ENCODE measurements at regions of chr7 and their contacts with region 1.

Region 1: GRCh38 chr7:153524070-153524601 is 528.1 kb upstream of the DPP6 start:
- DNase-seq: peak; percentile 4 to 60
- ATAC-seq: peak; percentile 37 to 94 (median 75)
- H3K4me3 ChIP-seq: no peak overlapping the region
- H3K27ac ChIP-seq: peak overlapping the region in 4 of 10 donors; percentile 33 to 72 (median 52)
- H3K4me1 ChIP-seq: peaks cover 0 to 14% (median 4%) of the 10 kb centered on the region in 9 donors
- H3K27me3 ChIP-seq: no peaks in the 10 kb centered on the region
- CTCF ChIP-seq: no peak

Region 2: DNA sequence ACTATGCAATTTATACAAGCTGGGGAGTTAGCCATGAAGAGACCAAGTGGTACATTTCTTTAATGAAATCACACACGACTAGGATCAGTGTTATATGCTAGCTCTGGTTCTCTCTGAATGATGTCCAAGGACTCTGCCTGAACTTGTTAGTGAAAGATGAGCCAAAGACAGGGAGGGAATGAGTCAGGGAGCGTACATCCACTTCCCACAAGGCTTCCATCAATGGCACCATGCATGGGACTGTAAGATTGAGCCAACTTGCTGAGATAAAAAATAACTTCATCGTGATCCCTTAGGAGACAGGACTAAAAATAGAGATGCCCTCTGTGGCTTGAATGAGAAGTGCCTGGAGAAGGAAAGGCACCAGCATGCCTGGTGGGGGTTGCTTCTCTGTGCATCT is 134.9 kb before region 1 on chr7:
- intact Hi-C with region 1: loop called in 2 of 10 experiments (anchors 1 to 5 kb)
- DNase-seq: no peak
- ATAC-seq: peak in 5 of 8 donors; percentile 71 to 93 (median 88)
- H3K4me3 ChIP-seq: no peak overlapping the region
- H3K27ac ChIP-seq: peak overlapping the region in 1 of 10 donors; percentile 40
- H3K4me1 ChIP-seq: no peaks in the 10 kb centered on the region
- H3K27me3 ChIP-seq: no peaks in the 10 kb centered on the region
- CTCF ChIP-seq: no peak

Region 3: GRCh38 chr7:153443032-153443701 is 81.0 kb before region 1 on chr7:
- intact Hi-C with region 1: no loop called
- DNase-seq: no peak
- ATAC-seq: no peak
- H3K4me3 ChIP-seq: no peak overlapping the region
- H3K27ac ChIP-seq: no peak overlapping the region
- H3K4me1 ChIP-seq: no peaks in the 10 kb centered on the region
- H3K27me3 ChIP-seq: peaks cover 0 to 11% (median 0%) of the 10 kb centered on the region in 7 donors
- CTCF ChIP-seq: no peak

Measured in heart right ventricle (tissue), 16 donors.